Gastrocnemius medialis (tissue), 4 donors: ENCODE measurements at regions of chr11 and their contacts with region 1.

Region 1: DNA sequence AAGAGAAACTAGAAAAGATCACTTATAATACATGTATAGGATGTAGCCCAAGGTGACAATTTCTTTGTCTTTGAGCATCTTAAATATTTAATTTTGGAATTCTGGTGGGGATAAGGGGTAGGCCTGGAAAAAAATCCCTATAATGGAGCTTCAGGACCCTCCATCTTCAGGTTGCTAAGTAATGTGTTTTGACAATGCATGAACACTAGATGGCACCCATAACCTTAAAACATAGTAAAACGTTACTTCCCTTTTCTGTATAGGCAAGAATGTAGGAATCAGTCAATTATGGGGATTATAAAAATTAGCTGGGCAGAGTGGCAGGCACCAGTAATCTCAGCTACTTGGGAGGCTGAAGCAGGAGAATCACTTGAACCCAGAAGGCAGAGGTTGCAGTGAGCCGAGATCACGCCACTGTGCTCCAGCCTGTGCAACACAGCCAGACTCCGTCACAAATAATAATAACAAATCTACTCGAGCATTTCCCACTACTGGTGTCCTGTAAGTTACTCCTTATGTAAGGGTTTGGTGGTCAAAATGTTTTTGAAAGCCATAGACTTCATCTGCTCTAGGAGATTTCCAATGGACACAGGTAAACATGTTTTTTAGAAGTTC is 541.9 kb upstream of the CCDC90B start:
- DNase-seq: no peak
- ATAC-seq: peak in 1 of 2 donors; percentile 33
- H3K4me3 ChIP-seq: peak overlapping the region in 3 of 4 donors; percentile 15 to 25 (median 23)
- H3K27ac ChIP-seq: no peak overlapping the region
- H3K4me1 ChIP-seq: no peaks in the 10 kb centered on the region
- H3K27me3 ChIP-seq: no peaks in the 10 kb centered on the region
- CTCF ChIP-seq: peak in 3 of 5 experiments; percentile 4 to 34 (median 17)
- POLR2A ChIP-seq: no peak

Region 2: GRCh38 chr11:82718307-82718706 is 1109.7 kb before region 1 on chr11:
- in situ Hi-C with region 1: loop called in 3 of 4 experiments (anchors 10 to 25 kb)
- intact Hi-C with region 1: loop called (anchors 5 kb)
- DNase-seq: no peak
- ATAC-seq: peak; percentile 61 to 75
- H3K4me3 ChIP-seq: no peak overlapping the region
- H3K27ac ChIP-seq: no peak overlapping the region
- H3K4me1 ChIP-seq: no peaks in the 10 kb centered on the region
- H3K27me3 ChIP-seq: no peaks in the 10 kb centered on the region
- CTCF ChIP-seq: peak; percentile 24 to 71 (median 54)
- POLR2A ChIP-seq: no peak

Region 3: GRCh38 chr11:83951474-83951873 is 123.4 kb after region 1 on chr11:
- in situ Hi-C with region 1: no loop called
- intact Hi-C with region 1: no loop called
- DNase-seq: no peak
- ATAC-seq: no peak
- H3K4me3 ChIP-seq: no peak overlapping the region
- H3K27ac ChIP-seq: no peak overlapping the region
- H3K4me1 ChIP-seq: no peaks in the 10 kb centered on the region
- H3K27me3 ChIP-seq: no peaks in the 10 kb centered on the region
- CTCF ChIP-seq: no peak
- POLR2A ChIP-seq: no peak